GM23248 (cell line): ENCODE measurements at regions of chr12 and their contacts with region 1.

Region 1: GRCh38 chr12:109385339-109386067 is 37.8 kb downstream of the MYO1H start:
- DNase-seq: peak; percentile 85
- H3K4me3 ChIP-seq: peak overlapping the region; percentile 59
- H3K27ac ChIP-seq: peak overlapping the region; percentile 43
- H3K4me1 ChIP-seq: no peaks in the 10 kb centered on the region
- H3K27me3 ChIP-seq: 0 out of 2 replicates have a peak, but pooled peaks cover 4% of the 10 kb centered on the region

Region 2: GRCh38 chr12:109110988-109111495 is 274.5 kb before region 1 on chr12:
- in situ Hi-C with region 1: loop called (anchors 10 kb)
- DNase-seq: peak; percentile 93
- H3K4me3 ChIP-seq: peak overlapping the region; percentile 81
- H3K27ac ChIP-seq: peak overlapping the region; percentile 92
- H3K4me1 ChIP-seq: peaks cover 9% of the 10 kb centered on the region
- H3K27me3 ChIP-seq: no peaks in the 10 kb centered on the region

Region 3: DNA sequence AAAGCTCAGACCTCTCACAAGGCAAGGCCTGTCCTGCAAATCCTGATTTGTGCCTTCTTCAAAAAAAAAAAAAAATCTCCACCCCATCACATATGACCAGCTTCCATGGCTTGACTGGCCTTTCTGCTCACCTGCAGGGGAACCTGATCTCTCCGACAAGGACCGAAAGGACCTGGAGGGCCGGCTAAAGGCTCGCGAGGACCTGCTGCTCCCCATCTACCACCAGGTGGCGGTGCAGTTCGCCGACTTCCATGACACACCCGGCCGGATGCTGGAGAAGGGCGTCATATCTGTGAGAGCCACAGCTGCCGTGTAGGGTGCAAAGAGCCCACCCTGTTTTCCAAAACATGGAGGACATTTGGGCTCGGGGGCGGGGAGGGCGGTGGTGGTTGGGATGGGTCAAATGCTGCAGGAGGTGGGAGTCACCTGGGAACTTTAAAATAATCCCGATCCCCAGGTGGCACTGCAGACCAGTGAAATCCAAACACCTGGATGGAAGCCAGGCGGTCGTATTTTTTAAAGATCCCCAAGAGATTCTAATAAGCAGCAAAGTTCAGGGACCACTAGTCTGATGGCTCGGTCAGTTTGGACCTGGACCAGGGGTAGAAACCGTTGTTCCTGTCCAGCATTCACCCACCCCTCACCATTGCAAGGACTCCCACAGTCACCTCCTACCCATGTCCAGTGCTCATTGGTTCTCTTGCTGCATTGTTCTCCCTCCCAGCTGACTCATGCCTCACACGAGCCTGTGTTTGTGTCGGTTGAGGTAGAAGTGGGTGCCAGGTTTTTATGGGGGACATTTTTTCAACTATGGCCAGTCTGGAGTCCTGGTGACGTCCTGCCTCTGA is 121.2 kb before region 1 on chr12:
- in situ Hi-C with region 1: loop called (anchors 10 kb)
- DNase-seq: peak; percentile 86
- H3K4me3 ChIP-seq: no peak overlapping the region
- H3K27ac ChIP-seq: no peak overlapping the region
- H3K4me1 ChIP-seq: no peaks in the 10 kb centered on the region
- H3K27me3 ChIP-seq: no peaks in the 10 kb centered on the region